ENCODE measurements at regions of chr6 and their contacts with region 1.

Region 1: DNA sequence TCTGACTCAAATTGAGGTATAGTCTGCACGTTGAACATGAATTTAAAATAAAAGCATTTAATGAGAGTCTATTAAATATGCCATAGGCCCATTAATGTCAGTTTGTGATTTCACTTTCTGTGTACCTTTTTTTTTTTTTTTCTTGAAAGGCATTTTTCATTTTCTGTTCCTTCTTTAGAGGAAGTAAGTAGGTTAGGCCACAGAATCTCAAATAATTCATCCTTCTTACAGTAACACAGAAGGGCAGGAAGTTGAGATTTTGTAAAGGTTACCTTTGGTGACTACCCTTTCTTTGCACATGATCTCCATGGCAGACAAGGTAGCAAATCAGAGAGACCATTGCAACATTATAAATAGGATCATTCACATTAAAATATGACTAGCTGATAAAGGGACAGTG is 9.6 kb downstream of the L3MBTL3 start:
- DNase-seq: no peak
- H3K4me3 Mint-ChIP-seq: no peak overlapping the region
- H3K27ac Mint-ChIP-seq: peak overlapping the region; percentile 14
- H3K4me1 Mint-ChIP-seq: peaks cover 49% of the 10 kb centered on the region
- H3K27me3 Mint-ChIP-seq: no peaks in the 10 kb centered on the region

Region 2: GRCh38 chr6:129448965-129449364 is 579.0 kb before region 1 on chr6:
- CTCF ChIA-PET with region 1: interaction called, 5 read pairs
- intact Hi-C with region 1: loop called (anchors 1 kb)
- DNase-seq: no peak
- H3K4me3 Mint-ChIP-seq: no peak overlapping the region
- H3K27ac Mint-ChIP-seq: peak overlapping the region; percentile 37
- H3K4me1 Mint-ChIP-seq: peaks cover 80% of the 10 kb centered on the region
- H3K27me3 Mint-ChIP-seq: no peaks in the 10 kb centered on the region

Region 3: GRCh38 chr6:130132286-130132701 is 104.3 kb after region 1 on chr6:
- CTCF ChIA-PET with region 1: no interaction called
- intact Hi-C with region 1: loop called (anchors 2 kb)
- DNase-seq: peak; percentile 69
- H3K4me3 Mint-ChIP-seq: peak overlapping the region; percentile 65
- H3K27ac Mint-ChIP-seq: peak overlapping the region; percentile 85
- H3K4me1 Mint-ChIP-seq: peaks cover 59% of the 10 kb centered on the region
- H3K27me3 Mint-ChIP-seq: no peaks in the 10 kb centered on the region

Region 4: DNA sequence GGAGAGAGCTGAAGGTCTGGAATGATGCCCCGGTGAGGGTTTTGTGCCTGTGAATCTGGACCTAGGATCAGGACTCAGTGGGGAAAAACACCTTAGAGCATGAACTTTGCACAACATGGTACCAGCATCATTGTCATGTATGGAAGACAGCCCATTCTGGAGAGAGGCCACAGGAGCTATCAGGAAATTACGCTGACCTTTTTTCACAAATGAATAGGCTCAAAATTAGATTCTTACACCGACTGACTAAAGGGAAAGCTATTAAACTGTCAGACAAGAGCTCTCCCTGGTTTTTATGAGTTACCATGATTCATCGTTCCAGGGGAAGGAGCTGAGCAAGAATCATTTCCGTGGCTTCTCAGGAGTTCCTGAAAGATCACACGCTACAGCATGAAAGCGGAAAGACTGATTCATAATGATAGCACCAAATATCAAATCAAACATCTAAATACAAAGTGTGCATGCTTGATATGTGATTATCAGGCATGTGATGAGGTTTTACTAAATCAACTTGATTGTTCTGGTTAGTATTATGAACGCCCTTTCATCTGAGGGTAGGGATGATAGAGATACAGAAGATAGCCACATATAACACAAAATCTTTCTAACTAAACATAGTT is 574.3 kb after region 1 on chr6:
- CTCF ChIA-PET with region 1: no interaction called
- intact Hi-C with region 1: loop called (anchors 5 kb)
- DNase-seq: peak; percentile 50
- H3K4me3 Mint-ChIP-seq: no peak overlapping the region
- H3K27ac Mint-ChIP-seq: peak overlapping the region; percentile 28
- H3K4me1 Mint-ChIP-seq: peaks cover 21% of the 10 kb centered on the region
- H3K27me3 Mint-ChIP-seq: no peaks in the 10 kb centered on the region

Region 5: DNA sequence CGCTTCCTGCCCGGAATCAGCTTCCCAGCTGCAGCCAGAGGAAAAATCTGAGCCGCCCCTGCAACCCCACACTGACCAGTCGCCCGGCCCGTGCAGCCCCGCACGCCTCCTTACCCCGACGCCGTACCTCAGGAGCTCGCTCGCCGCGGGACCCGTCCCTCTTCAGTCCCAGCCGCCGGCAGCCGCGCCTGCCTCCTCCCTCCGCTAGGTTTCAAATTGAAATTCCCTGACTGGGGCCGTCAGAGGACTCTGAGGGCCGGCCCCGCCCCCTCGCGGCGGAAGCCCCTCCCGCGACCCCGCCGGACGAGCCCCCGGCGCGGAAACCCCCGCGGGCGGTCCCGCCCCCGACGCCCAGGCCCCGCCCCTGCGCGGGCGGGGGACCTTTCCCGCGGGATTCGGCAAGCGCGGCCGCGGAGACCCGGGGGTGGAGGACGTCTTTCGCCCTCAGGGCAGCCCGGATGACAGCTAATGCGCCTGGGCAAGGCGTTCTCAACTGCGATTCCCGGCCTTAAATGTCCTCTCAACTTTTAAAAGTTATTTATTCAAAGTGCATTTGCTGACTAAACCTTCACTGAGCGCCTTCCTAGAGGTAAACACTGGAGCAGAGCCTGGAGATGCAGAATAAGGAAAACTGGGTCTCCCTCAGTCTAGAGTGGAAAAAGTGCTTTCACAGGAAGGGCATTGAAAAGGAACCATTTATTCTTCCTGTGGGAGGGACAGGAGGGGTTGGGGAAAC is 1035.2 kb after region 1 on chr6 and contains the start of gene EPB41L2:
- CTCF ChIA-PET with region 1: no interaction called
- intact Hi-C with region 1: loop called (anchors 5 kb)
- DNase-seq: peak; percentile 80
- H3K4me3 Mint-ChIP-seq: peak within 1 kb of the TSS; percentile 80
- H3K27ac Mint-ChIP-seq: no peak within 1 kb of the TSS
- H3K4me1 Mint-ChIP-seq: peaks cover 22% of the 10 kb centered on the region
- H3K27me3 Mint-ChIP-seq: peaks cover 2% of the 10 kb centered on the region
- total RNA-seq, gene EPB41L2: 33.5 to 37.7 TPM

Measured in activated naive CD4-positive, alpha-beta T cell treated with anti-CD3 and anti-CD28 coated beads for 36 hours (primary cell).